CD8-positive, alpha-beta T cell (primary cell): ENCODE measurements at regions of chr1 and their contacts with region 1.

Region 1: GRCh38 chr1:198620951-198621824 is 17.7 kb upstream of the PTPRC start:
- DNase-seq: peak; percentile 29 to 91 (median 67)
- ATAC-seq: peak; percentile 76
- H3K4me3 ChIP-seq: peak overlapping the region; percentile 34 to 38
- H3K4me3 Mint-ChIP-seq: peak overlapping the region; percentile 78
- H3K27ac ChIP-seq: peak overlapping the region; percentile 68 to 72
- H3K27ac Mint-ChIP-seq: peak overlapping the region; percentile 93
- H3K4me1 ChIP-seq: peaks cover 75% of the 10 kb centered on the region
- H3K4me1 Mint-ChIP-seq: peaks cover 91% of the 10 kb centered on the region
- H3K27me3 ChIP-seq: no peaks in the 10 kb centered on the region
- H3K27me3 Mint-ChIP-seq: no peaks in the 10 kb centered on the region
- CTCF ChIP-seq: no peak

Region 2: GRCh38 chr1:197775282-197776262 is 845.6 kb before region 1 on chr1 and contains the start of gene DENND1B:
- CTCF ChIA-PET with region 1: no interaction called
- POLR2A ChIA-PET with region 1: no interaction called
- intact Hi-C with region 1: loop called in 1 of 2 experiments (anchors 10 kb)
- DNase-seq: peak; percentile 56 to 90 (median 83)
- ATAC-seq: peak; percentile 55
- H3K4me3 ChIP-seq: peak within 1 kb of the TSS; percentile 62 to 71
- H3K4me3 Mint-ChIP-seq: peak within 1 kb of the TSS; percentile 83
- H3K27ac ChIP-seq: peak within 1 kb of the TSS; percentile 61 to 88
- H3K27ac Mint-ChIP-seq: peak within 1 kb of the TSS; percentile 97
- H3K4me1 ChIP-seq: peaks cover 33% of the 10 kb centered on the region
- H3K4me1 Mint-ChIP-seq: peaks cover 66% of the 10 kb centered on the region
- H3K27me3 ChIP-seq: no peaks in the 10 kb centered on the region
- H3K27me3 Mint-ChIP-seq: no peaks in the 10 kb centered on the region
- CTCF ChIP-seq: no peak
- total RNA-seq, gene DENND1B: 17.6 to 19.6 TPM

Region 3: GRCh38 chr1:198234520-198235251 is 386.5 kb before region 1 on chr1:
- CTCF ChIA-PET with region 1: no interaction called
- POLR2A ChIA-PET with region 1: no interaction called
- intact Hi-C with region 1: no loop called
- DNase-seq: peak in 2 of 9 experiments; percentile 17 to 36
- ATAC-seq: peak; percentile 38
- H3K4me3 ChIP-seq: no peak overlapping the region
- H3K4me3 Mint-ChIP-seq: no peak overlapping the region
- H3K27ac ChIP-seq: peak overlapping the region in 1 of 2 experiments; percentile 20
- H3K27ac Mint-ChIP-seq: no peak overlapping the region
- H3K4me1 ChIP-seq: peaks cover 12% of the 10 kb centered on the region
- H3K4me1 Mint-ChIP-seq: peaks cover 50% of the 10 kb centered on the region
- H3K27me3 ChIP-seq: no peaks in the 10 kb centered on the region
- H3K27me3 Mint-ChIP-seq: no peaks in the 10 kb centered on the region
- CTCF ChIP-seq: no peak

Region 4: GRCh38 chr1:198556971-198557370 is 64.2 kb before region 1 on chr1:
- CTCF ChIA-PET with region 1: interaction called, 3 read pairs
- POLR2A ChIA-PET with region 1: interaction called, 16 read pairs
- intact Hi-C with region 1: no loop called
- DNase-seq: peak; percentile 37 to 94 (median 63)
- ATAC-seq: peak; percentile 87
- H3K4me3 ChIP-seq: peak overlapping the region; percentile 3 to 33
- H3K4me3 Mint-ChIP-seq: peak overlapping the region; percentile 65
- H3K27ac ChIP-seq: peak overlapping the region; percentile 8 to 68
- H3K27ac Mint-ChIP-seq: peak overlapping the region; percentile 64
- H3K4me1 ChIP-seq: peaks cover 88% of the 10 kb centered on the region
- H3K4me1 Mint-ChIP-seq: peaks cover 87% of the 10 kb centered on the region
- H3K27me3 ChIP-seq: no peaks in the 10 kb centered on the region
- H3K27me3 Mint-ChIP-seq: no peaks in the 10 kb centered on the region
- CTCF ChIP-seq: no peak

Region 5: GRCh38 chr1:198633675-198634121 is 12.5 kb after region 1 on chr1:
- CTCF ChIA-PET with region 1: interaction called, 62 read pairs
- POLR2A ChIA-PET with region 1: interaction called, 105 read pairs
- intact Hi-C with region 1: loop called (anchors 1 kb)
- DNase-seq: peak in 1 of 9 experiments; percentile 67
- ATAC-seq: no peak
- H3K4me3 ChIP-seq: no peak overlapping the region
- H3K4me3 Mint-ChIP-seq: peak overlapping the region; percentile 16
- H3K27ac ChIP-seq: peak overlapping the region in 1 of 2 experiments; percentile 18
- H3K27ac Mint-ChIP-seq: peak overlapping the region; percentile 52
- H3K4me1 ChIP-seq: peaks cover 91% of the 10 kb centered on the region
- H3K4me1 Mint-ChIP-seq: peaks cover 89% of the 10 kb centered on the region
- H3K27me3 ChIP-seq: no peaks in the 10 kb centered on the region
- H3K27me3 Mint-ChIP-seq: no peaks in the 10 kb centered on the region
- CTCF ChIP-seq: no peak

Region 6: GRCh38 chr1:198651650-198652400 is 30.6 kb after region 1 on chr1:
- CTCF ChIA-PET with region 1: interaction called, 15 read pairs
- POLR2A ChIA-PET with region 1: interaction called, 66 read pairs
- intact Hi-C with region 1: loop called in 1 of 2 experiments (anchors 5 kb)
- DNase-seq: peak in 1 of 9 experiments; percentile 58
- ATAC-seq: peak; percentile 13
- H3K4me3 ChIP-seq: peak overlapping the region; percentile 29 to 30
- H3K4me3 Mint-ChIP-seq: peak overlapping the region; percentile 75
- H3K27ac ChIP-seq: peak overlapping the region; percentile 41 to 97
- H3K27ac Mint-ChIP-seq: peak overlapping the region; percentile 95
- H3K4me1 ChIP-seq: peaks cover 79% of the 10 kb centered on the region
- H3K4me1 Mint-ChIP-seq: peaks cover 73% of the 10 kb centered on the region
- H3K27me3 ChIP-seq: no peaks in the 10 kb centered on the region
- H3K27me3 Mint-ChIP-seq: no peaks in the 10 kb centered on the region
- CTCF ChIP-seq: no peak

Region 7: GRCh38 chr1:198669023-198669698 is 48.0 kb after region 1 on chr1:
- CTCF ChIA-PET with region 1: interaction called, 6 read pairs
- POLR2A ChIA-PET with region 1: interaction called, 6 read pairs
- intact Hi-C with region 1: loop called in 1 of 2 experiments (anchors 5 kb)
- DNase-seq: peak in 5 of 9 experiments; percentile 40 to 85 (median 56)
- ATAC-seq: peak; percentile 77
- H3K4me3 ChIP-seq: peak overlapping the region in 1 of 2 experiments; percentile 8
- H3K4me3 Mint-ChIP-seq: peak overlapping the region; percentile 61
- H3K27ac ChIP-seq: peak overlapping the region; percentile 54 to 97
- H3K27ac Mint-ChIP-seq: peak overlapping the region; percentile 96
- H3K4me1 ChIP-seq: peaks cover 91% of the 10 kb centered on the region
- H3K4me1 Mint-ChIP-seq: peaks cover 90% of the 10 kb centered on the region
- H3K27me3 ChIP-seq: no peaks in the 10 kb centered on the region
- H3K27me3 Mint-ChIP-seq: no peaks in the 10 kb centered on the region
- CTCF ChIP-seq: no peak

Region 8: DNA sequence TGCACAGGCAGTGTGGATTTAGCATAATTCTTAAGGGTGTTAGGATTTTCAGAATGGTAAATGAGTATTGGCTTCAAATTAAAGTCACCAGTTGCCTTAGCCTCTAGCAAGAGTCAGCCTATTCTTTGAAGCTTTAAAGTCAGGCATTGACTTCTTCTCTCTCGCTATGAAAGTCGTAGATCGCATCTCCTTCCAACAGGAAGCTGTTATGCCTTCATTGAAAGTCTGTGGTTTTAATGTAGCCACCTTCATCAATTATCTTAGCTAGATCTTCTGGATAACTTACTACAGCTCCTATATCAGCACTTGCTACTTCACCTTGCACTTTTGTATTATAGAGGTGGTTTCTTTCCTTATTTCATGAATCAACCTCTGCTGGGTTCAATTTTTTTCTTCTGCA is 337.8 kb after region 1 on chr1:
- CTCF ChIA-PET with region 1: no interaction called
- POLR2A ChIA-PET with region 1: no interaction called
- intact Hi-C with region 1: no loop called
- DNase-seq: peak in 1 of 9 experiments; percentile 13
- ATAC-seq: peak; percentile 48
- H3K4me3 ChIP-seq: no peak overlapping the region
- H3K4me3 Mint-ChIP-seq: no peak overlapping the region
- H3K27ac ChIP-seq: no peak overlapping the region
- H3K27ac Mint-ChIP-seq: peak overlapping the region; percentile 8
- H3K4me1 ChIP-seq: peaks cover 29% of the 10 kb centered on the region
- H3K4me1 Mint-ChIP-seq: peaks cover 29% of the 10 kb centered on the region
- H3K27me3 ChIP-seq: no peaks in the 10 kb centered on the region
- H3K27me3 Mint-ChIP-seq: no peaks in the 10 kb centered on the region
- CTCF ChIP-seq: no peak